Endothelial cell of umbilical vein (primary cell): ENCODE measurements at regions of chr15 and their contacts with region 1.

Region 1: DNA sequence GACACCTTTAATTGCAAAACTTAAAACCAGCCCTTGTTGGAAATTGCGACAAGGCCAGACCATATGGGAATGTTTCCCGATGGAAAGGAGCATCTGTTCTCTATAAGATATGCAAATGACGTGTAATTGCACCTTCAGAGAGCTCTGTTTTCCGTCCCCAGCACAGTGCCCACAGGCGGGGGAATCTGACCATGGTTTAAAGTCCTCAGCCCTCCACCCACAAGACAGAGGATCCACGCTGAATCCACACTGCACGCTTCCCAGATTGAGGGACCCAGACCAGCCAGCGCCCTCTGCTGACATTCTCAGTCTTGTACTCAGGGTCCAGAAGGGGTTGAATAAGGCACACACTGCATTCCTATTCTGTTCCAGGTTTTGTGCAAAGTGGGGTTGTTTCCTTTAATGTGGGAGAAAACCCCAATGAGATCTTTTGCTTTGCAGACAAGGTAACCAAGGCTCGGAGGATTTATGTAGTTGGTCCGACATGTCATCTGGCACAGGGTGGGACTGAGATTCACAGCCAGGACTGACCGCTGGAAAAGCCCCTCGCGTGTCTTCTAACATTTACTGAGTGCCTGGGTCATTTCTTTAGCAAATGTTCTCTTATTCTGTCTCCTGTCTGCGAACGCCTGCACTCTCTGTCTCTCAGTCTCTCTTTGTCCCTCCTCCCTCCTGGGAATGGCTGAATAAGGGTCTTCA is 36.8 kb upstream of the KLHL25 start:
- DNase-seq: peak; percentile 49
- H3K4me3 ChIP-seq: no peak overlapping the region
- H3K27ac ChIP-seq: no peak overlapping the region
- H3K4me1 ChIP-seq: no peaks in the 10 kb centered on the region
- H3K27me3 ChIP-seq: peaks cover 4 to 5% of the 10 kb centered on the region in 2 experiments
- CTCF ChIP-seq: peak; percentile 50 to 73
- POLR2A ChIP-seq: no peak

Region 2: DNA sequence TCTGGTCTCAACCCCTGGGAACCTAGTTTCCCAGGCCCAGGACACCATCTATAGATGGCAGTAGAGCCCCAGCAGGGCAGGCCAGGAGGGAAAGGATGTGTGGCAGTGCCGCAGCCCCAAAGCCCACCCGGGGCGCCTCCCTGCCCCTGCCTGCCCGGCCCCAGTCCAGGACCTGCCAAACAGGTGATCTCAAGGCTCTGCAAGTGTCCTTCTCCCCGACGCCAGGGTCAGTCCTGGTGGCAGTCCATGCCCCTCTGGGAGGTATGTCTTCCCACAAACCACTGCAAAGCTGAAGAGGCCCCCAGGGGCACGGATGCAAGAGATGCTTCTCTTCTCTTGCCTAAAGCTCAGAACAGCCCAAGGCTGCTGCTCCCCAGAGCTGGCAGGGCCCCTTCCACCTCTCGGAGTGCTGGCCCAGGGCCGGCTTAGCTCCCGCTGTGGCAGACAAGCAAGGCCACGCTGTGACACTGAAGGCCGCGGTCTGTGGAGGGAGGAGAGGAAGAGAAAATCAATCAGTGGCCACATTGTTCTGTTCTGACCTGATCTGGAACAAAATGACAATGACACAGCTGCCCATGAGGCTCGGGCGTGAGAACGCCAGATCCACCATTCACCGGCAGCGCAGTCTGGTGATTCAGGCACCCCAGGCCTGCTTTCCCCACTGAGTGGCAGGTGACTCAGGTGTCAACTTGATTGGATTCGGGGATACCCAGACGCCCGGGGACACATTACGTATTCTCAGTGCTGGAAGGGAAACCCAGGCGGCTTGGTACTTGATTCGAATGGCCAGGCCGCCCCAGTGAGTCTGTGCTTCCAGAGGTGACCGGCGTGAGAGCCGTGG is 70.8 kb before region 1 on chr15:
- CTCF ChIA-PET with region 1: interaction called, 4 read pairs
- POLR2A ChIA-PET with region 1: no interaction called
- dilution Hi-C with region 1: no loop called
- intact Hi-C with region 1: loop called (anchors 1 kb)
- DNase-seq: no peak
- H3K4me3 ChIP-seq: no peak overlapping the region
- H3K27ac ChIP-seq: no peak overlapping the region
- H3K4me1 ChIP-seq: no peaks in the 10 kb centered on the region
- H3K27me3 ChIP-seq: no peaks in the 10 kb centered on the region
- CTCF ChIP-seq: peak in 1 of 2 donors; percentile 9
- POLR2A ChIP-seq: no peak

Region 3: DNA sequence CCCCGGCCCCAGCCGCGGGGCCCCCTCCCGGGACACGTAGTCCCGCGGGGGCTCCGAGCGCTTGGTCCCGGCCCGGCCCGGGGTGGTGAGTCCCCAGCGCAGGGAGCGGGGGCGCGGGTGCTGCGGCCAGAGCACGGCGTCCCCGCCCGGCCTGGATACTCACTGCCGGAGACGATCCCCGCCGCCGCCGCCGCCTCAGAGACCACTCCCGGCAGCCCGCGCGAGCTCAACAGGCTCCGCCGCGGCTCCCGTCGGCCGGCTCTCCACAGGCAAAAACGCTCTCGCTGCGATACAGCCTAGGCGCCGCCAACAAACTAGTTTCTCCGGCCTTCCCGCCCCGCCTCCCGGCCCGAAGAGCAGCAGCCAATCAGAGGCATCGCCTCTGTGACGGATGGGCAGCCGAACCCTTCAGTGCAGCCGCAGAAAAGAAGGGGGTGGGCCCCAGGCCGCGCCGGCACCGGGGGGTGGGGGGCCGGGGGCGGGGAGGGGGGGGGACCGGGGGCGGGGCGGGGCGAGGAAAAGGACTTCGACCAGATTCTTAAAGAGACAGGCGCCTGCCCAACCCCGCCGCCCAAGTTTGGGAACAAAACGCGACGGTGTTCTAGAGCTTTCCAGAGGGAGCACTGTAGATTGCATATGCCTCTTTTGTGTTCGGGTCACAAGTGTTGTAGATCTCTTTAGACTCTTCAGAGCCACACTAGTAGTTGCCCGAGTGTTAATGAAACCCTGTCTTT is 36.8 kb before region 1 on chr15 and contains the start of gene KLHL25:
- CTCF ChIA-PET with region 1: interaction called, 4 read pairs
- POLR2A ChIA-PET with region 1: no interaction called
- dilution Hi-C with region 1: no loop called
- intact Hi-C with region 1: loop called (anchors 2 kb)
- DNase-seq: peak; percentile 95
- H3K4me3 ChIP-seq: peak within 1 kb of the TSS; percentile 43 to 76 (median 73)
- H3K27ac ChIP-seq: peak within 1 kb of the TSS; percentile 46
- H3K4me1 ChIP-seq: peaks cover 16% of the 10 kb centered on the region
- H3K27me3 ChIP-seq: peaks cover 2% of the 10 kb centered on the region in 2 experiments
- CTCF ChIP-seq: no peak
- POLR2A ChIP-seq: peak; percentile 66
- total RNA-seq, gene KLHL25: 5.2 and 5.4 TPM in 2 replicates